SK-N-SH (cell line): ENCODE measurements at regions of chr10 and their contacts with region 1.

Region 1: GRCh38 chr10:42753126-42753506 is 29.5 kb upstream of the BMS1 start:
- DNase-seq: peak; percentile 80
- H3K4me3 ChIP-seq: peak overlapping the region; percentile 43 to 61
- H3K27ac ChIP-seq: no peak overlapping the region
- H3K4me1 ChIP-seq: peaks cover 0 to 13% of the 10 kb centered on the region in 2 experiments; a peak in 1 of 4 replicates
- H3K27me3 ChIP-seq: peaks cover 49% of the 10 kb centered on the region
- CTCF ChIP-seq: peak; percentile 78
- EP300 ChIP-seq: no peak
- RAD21 ChIP-seq: peak; percentile 54

Region 2: GRCh38 chr10:42734536-42734935 is 18.6 kb before region 1 on chr10:
- CTCF ChIA-PET with region 1: interaction called, 17 read pairs
- POLR2A ChIA-PET with region 1: no interaction called
- DNase-seq: no peak
- H3K4me3 ChIP-seq: no peak overlapping the region
- H3K27ac ChIP-seq: no peak overlapping the region
- H3K4me1 ChIP-seq: no peaks in the 10 kb centered on the region
- H3K27me3 ChIP-seq: peaks cover 17% of the 10 kb centered on the region
- CTCF ChIP-seq: no peak
- EP300 ChIP-seq: no peak
- RAD21 ChIP-seq: no peak

Region 3: DNA sequence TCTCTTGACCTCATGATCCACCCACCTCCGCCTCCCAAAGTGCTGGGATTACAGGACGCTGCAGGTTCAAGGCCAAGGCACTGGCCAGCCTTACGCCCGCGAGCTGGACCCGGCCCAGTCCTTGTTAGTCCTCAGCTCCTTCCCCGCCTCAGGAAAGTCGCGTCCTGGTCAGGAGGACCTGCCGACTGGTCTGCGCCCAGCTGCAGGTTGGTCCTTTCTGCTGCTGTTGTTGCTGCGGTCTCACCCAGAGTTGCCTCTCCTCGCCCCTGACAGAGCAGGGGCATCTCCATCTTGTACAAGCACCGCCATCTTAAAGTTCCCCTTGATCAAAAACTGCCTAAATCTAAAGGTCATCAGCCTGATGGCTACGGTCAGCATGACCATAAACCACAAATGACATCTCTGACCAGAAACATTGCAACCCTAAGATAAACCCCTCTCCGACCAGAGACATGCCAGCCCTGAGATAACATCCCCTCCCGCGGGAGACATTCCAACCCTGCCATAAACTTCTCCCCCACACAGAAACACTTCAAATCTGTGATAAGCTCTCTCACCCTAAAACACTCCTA is 15.6 kb after region 1 on chr10:
- CTCF ChIA-PET with region 1: interaction called, 21 read pairs
- POLR2A ChIA-PET with region 1: no interaction called
- DNase-seq: no peak
- H3K4me3 ChIP-seq: no peak overlapping the region
- H3K27ac ChIP-seq: no peak overlapping the region
- H3K4me1 ChIP-seq: peaks cover 0 to 3% of the 10 kb centered on the region in 2 experiments; a peak in 1 of 4 replicates
- H3K27me3 ChIP-seq: peaks cover 24% of the 10 kb centered on the region
- CTCF ChIP-seq: no peak
- EP300 ChIP-seq: no peak
- RAD21 ChIP-seq: no peak

Region 4: GRCh38 chr10:42782446-42783180 is 29.5 kb after region 1 on chr10 and contains the start of gene BMS1:
- CTCF ChIA-PET with region 1: interaction called, 14 read pairs
- POLR2A ChIA-PET with region 1: interaction called, 11 read pairs
- DNase-seq: peak; percentile 93
- H3K4me3 ChIP-seq: peak within 1 kb of the TSS; percentile 84 to 93
- H3K27ac ChIP-seq: peak within 1 kb of the TSS; percentile 86 to 87
- H3K4me1 ChIP-seq: peaks cover 5 to 10% of the 10 kb centered on the region in 2 experiments; a peak in 3 of 4 replicates
- H3K27me3 ChIP-seq: no peaks in the 10 kb centered on the region; the same call in 1 of the 2 replicates
- CTCF ChIP-seq: no peak
- EP300 ChIP-seq: no peak; a peak in 1 of 4 replicates
- RAD21 ChIP-seq: no peak
- polyA plus RNA-seq, gene BMS1: 4.9 and 5.3 TPM in 2 replicates

Region 5: DNA sequence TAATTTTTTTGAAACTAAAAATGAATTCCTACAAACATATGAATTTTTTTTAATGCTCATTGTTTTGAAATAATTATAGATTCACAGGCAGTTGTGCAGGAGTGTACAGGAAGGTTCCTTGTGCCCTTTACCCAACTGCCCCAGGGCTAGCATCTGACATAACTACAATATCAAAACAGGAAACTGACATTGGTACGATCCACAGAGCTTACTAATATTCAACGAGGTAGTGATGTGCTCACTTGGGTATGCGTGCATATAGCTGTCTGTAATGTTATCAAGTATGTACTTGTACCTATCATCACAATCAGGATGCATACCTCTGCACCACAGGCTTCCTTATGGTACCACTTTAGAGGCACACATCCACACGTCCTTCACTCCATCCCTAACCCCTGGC is 97.8 kb after region 1 on chr10:
- CTCF ChIA-PET with region 1: no interaction called
- POLR2A ChIA-PET with region 1: no interaction called
- DNase-seq: no peak
- H3K4me3 ChIP-seq: no peak overlapping the region
- H3K27ac ChIP-seq: no peak overlapping the region
- H3K4me1 ChIP-seq: no peaks in the 10 kb centered on the region
- H3K27me3 ChIP-seq: no peaks in the 10 kb centered on the region
- CTCF ChIP-seq: no peak
- EP300 ChIP-seq: no peak
- RAD21 ChIP-seq: no peak